BJ (cell line): ENCODE measurements at regions of chr3 and their contacts with region 1.

Region 1: GRCh38 chr3:71051893-71052687 is 531.4 kb downstream of the FOXP1 start:
- DNase-seq: no peak
- H3K4me3 ChIP-seq: no peak overlapping the region
- H3K27me3 ChIP-seq: no peaks in the 10 kb centered on the region
- CTCF ChIP-seq: no peak

Region 2: DNA sequence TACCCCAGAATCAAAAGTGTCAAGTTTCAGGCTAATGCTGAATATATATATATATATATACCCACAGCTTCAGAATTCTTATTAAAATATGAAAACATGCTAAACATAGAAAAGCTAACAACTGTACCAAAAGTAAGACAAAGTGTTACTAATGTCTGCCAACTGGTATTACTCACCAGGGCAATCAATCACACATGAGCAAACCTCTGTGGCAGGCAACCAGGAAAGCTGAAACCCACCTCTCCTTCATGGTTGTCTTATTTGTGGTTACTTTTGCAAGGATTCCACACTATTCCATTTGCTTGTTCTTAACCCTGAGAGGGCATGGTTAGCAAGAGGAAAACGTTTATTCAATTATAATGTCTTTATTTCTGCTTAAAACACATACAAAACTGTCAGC is 227.3 kb before region 1 on chr3:
- CTCF ChIA-PET with region 1: no interaction called
- POLR2A ChIA-PET with region 1: interaction called, 15 read pairs
- DNase-seq: no peak
- H3K4me3 ChIP-seq: no peak overlapping the region
- H3K27me3 ChIP-seq: no peaks in the 10 kb centered on the region
- CTCF ChIP-seq: no peak

Region 3: DNA sequence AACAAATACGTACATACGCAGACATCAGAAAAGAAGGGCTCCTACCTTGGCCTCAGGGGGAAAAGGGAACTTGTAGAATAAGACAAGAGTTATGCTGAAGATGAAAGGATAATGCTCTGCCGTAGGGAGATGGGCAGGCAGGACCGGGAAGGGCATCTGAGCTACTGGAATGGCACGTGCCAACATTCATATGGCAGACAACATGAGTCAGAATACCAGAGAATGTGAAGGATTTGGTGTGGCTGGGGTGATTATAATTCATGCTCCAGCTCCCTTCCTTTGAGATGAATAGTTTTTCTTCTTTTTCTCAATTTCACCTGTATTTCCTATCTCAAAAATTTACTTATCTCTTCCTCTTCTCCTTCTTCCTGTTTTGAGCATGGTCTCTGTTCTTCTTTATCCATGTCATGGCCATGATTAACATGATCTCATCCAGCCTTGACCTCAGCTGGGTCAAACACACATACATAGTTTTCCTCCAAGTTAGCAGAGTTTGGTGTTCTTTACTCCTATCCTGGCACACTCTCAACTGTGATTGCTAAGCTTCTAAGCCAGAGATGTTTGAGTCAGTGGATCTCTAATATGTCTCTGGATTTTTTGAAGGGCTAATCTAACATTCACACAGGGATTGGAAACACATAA is 24.4 kb after region 1 on chr3:
- CTCF ChIA-PET with region 1: no interaction called
- POLR2A ChIA-PET with region 1: no interaction called
- DNase-seq: no peak
- H3K4me3 ChIP-seq: no peak overlapping the region
- H3K27me3 ChIP-seq: no peaks in the 10 kb centered on the region
- CTCF ChIP-seq: no peak

Region 4: DNA sequence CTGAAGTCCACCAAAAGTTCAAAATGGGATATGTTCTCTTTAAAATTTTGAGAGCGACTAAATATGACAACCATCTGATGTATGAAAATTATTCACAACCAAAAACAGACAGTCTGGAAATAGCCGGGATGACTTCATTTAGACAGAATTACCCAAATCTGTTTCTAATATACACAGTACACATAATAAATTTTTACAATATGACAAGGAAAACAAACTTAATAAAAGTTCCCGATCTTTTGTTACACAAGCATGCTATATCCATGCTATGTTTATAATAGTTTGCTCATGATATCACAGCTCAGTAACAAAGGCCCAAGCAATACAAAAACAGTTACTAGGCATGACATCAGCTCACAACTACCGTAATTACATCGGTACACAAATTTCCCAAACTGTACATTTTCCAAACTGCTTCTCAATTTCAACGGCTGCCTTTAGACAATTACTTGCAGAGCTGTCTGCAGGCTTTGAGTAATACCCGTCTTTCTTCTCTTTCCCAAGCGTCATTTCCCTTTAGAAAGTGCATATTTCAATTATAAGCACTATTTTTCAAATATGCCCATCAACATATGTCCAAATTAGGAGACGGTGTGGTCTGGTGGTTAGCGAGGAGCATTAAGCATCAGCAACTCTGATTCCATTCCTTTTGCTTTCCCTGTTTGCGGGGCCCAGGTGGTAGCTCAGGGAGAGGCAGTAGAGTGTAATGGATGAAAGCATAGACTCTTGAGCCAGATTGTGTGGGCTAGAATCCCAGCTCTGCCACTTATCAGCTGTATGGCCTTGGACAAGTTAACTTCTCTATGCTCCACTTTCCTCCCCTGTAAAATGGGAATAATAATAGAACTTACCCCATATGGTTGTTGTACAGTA is 50.3 kb after region 1 on chr3:
- CTCF ChIA-PET with region 1: interaction called, 3 read pairs
- POLR2A ChIA-PET with region 1: interaction called, 14 read pairs
- DNase-seq: peak; percentile 96
- H3K4me3 ChIP-seq: no peak overlapping the region
- H3K27me3 ChIP-seq: no peaks in the 10 kb centered on the region
- CTCF ChIP-seq: no peak